B cell (primary cell): ENCODE measurements at regions of chr3 and their contacts with region 1.

Region 1: DNA sequence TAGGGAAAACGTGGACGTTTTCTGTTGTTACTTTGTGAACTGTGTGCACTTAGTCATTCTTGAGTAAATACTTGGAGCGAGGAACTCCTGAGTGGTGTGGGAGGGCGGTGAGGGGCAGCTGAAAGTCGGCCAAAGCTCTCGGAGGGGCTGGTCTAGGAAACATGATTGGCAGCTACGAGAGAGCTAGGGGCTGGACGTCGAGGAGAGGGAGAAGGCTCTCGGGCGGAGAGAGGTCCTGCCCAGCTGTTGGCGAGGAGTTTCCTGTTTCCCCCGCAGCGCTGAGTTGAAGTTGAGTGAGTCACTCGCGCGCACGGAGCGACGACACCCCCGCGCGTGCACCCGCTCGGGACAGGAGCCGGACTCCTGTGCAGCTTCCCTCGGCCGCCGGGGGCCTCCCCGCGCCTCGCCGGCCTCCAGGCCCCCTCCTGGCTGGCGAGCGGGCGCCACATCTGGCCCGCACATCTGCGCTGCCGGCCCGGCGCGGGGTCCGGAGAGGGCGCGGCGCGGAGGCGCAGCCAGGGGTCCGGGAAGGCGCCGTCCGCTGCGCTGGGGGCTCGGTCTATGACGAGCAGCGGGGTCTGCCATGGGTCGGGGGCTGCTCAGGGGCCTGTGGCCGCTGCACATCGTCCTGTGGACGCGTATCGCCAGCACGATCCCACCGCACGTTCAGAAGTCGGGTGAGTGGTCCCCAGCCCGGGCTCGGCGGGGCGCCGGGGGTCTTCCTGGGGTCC is at the start of gene TGFBR2:
- DNase-seq: peak; percentile 91
- ATAC-seq: peak; percentile 73
- H3K4me3 ChIP-seq: peak within 1 kb of the TSS; percentile 90 to 99 (median 96)
- H3K4me3 Mint-ChIP-seq: peak within 1 kb of the TSS; percentile 97
- H3K27ac ChIP-seq: peak within 1 kb of the TSS; percentile 94 to 95
- H3K27ac Mint-ChIP-seq: peak within 1 kb of the TSS; percentile 97
- H3K4me1 ChIP-seq: peaks cover 65 to 76% of the 10 kb centered on the region in 2 donors
- H3K4me1 Mint-ChIP-seq: peaks cover 73% of the 10 kb centered on the region
- H3K27me3 ChIP-seq: no peaks in the 10 kb centered on the region
- H3K27me3 Mint-ChIP-seq: no peaks in the 10 kb centered on the region
- CTCF ChIP-seq: no peak
- total RNA-seq, gene TGFBR2: 189 and 199 TPM in 2 replicates

Region 2: GRCh38 chr3:30269751-30270445 is 336.6 kb before region 1 on chr3:
- CTCF ChIA-PET with region 1: no interaction called
- POLR2A ChIA-PET with region 1: no interaction called
- intact Hi-C with region 1: loop called (anchors 5 kb)
- DNase-seq: peak; percentile 77
- ATAC-seq: peak; percentile 96
- H3K4me3 ChIP-seq: peak overlapping the region in 1 of 5 experiments; percentile 30
- H3K4me3 Mint-ChIP-seq: peak overlapping the region; percentile 57
- H3K27ac ChIP-seq: peak overlapping the region; percentile 8 to 25
- H3K27ac Mint-ChIP-seq: peak overlapping the region; percentile 0
- H3K4me1 ChIP-seq: peaks cover 10 to 12% of the 10 kb centered on the region in 2 donors
- H3K4me1 Mint-ChIP-seq: peaks cover 10% of the 10 kb centered on the region
- H3K27me3 ChIP-seq: no peaks in the 10 kb centered on the region
- H3K27me3 Mint-ChIP-seq: no peaks in the 10 kb centered on the region
- CTCF ChIP-seq: no peak

Region 3: DNA sequence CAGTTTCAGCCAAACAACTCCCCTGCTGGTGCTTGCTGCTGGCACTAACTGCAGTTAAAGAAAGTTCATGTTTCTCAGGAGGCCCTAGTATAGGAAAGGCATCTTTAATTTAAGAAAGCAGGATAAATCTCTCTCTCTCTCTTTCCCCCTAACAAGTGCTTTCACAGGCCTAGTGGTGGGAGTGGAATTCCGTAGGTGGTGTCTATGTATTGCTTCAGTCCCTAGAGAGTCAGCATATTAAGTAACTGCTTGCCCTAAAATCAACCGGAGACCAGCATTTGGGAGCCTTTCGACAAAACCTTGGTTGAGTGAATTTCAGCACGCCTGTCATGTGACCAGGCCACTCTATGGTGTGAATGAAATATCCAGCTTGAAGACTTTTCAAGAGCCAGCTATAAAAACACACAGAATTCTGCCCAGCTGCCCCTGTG is 169.3 kb before region 1 on chr3:
- CTCF ChIA-PET with region 1: no interaction called
- POLR2A ChIA-PET with region 1: no interaction called
- intact Hi-C with region 1: loop called (anchors 5 kb)
- DNase-seq: no peak
- ATAC-seq: no peak
- H3K4me3 ChIP-seq: no peak overlapping the region
- H3K4me3 Mint-ChIP-seq: no peak overlapping the region
- H3K27ac ChIP-seq: no peak overlapping the region
- H3K27ac Mint-ChIP-seq: no peak overlapping the region
- H3K4me1 ChIP-seq: peaks cover 28 to 42% of the 10 kb centered on the region in 2 donors
- H3K4me1 Mint-ChIP-seq: peaks cover 37% of the 10 kb centered on the region
- H3K27me3 ChIP-seq: no peaks in the 10 kb centered on the region
- H3K27me3 Mint-ChIP-seq: no peaks in the 10 kb centered on the region
- CTCF ChIP-seq: no peak

Region 4: DNA sequence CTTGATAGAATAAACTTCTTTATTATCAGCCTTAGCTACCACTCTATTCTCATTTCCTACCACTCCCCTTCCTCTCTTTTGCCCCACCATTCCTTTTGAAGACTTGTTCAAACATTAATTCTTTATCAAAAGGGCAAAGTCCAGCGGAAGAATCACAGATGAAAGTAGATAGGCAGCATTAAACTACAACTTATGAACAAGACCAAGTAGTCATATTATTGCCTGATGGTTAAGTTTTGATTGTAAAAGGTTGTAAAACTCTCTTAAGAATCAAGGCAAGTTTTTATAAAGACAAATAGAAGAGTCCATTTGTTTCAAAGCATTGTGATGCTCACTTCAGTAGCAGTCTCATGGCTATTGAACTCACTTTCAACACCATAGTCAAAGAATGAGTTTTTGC is 22.5 kb before region 1 on chr3:
- CTCF ChIA-PET with region 1: no interaction called
- POLR2A ChIA-PET with region 1: no interaction called
- intact Hi-C with region 1: no loop called
- DNase-seq: no peak
- ATAC-seq: no peak
- H3K4me3 ChIP-seq: no peak overlapping the region
- H3K4me3 Mint-ChIP-seq: no peak overlapping the region
- H3K27ac ChIP-seq: no peak overlapping the region
- H3K27ac Mint-ChIP-seq: no peak overlapping the region
- H3K4me1 ChIP-seq: no peaks in the 10 kb centered on the region
- H3K4me1 Mint-ChIP-seq: peaks cover 3% of the 10 kb centered on the region
- H3K27me3 ChIP-seq: no peaks in the 10 kb centered on the region
- H3K27me3 Mint-ChIP-seq: no peaks in the 10 kb centered on the region
- CTCF ChIP-seq: no peak

Region 5: GRCh38 chr3:30623351-30623750 is 16.9 kb after region 1 on chr3:
- CTCF ChIA-PET with region 1: interaction called, 14 read pairs
- POLR2A ChIA-PET with region 1: interaction called, 4 read pairs
- intact Hi-C with region 1: loop called (anchors 1 kb)
- DNase-seq: no peak
- ATAC-seq: no peak
- H3K4me3 ChIP-seq: peak overlapping the region in 1 of 5 experiments; percentile 29
- H3K4me3 Mint-ChIP-seq: peak overlapping the region; percentile 65
- H3K27ac ChIP-seq: peak overlapping the region; percentile 42 to 89
- H3K27ac Mint-ChIP-seq: peak overlapping the region; percentile 93
- H3K4me1 ChIP-seq: peaks cover 94 to 100% of the 10 kb centered on the region in 2 donors
- H3K4me1 Mint-ChIP-seq: peaks cover 94% of the 10 kb centered on the region
- H3K27me3 ChIP-seq: no peaks in the 10 kb centered on the region
- H3K27me3 Mint-ChIP-seq: no peaks in the 10 kb centered on the region
- CTCF ChIP-seq: no peak

Region 6: DNA sequence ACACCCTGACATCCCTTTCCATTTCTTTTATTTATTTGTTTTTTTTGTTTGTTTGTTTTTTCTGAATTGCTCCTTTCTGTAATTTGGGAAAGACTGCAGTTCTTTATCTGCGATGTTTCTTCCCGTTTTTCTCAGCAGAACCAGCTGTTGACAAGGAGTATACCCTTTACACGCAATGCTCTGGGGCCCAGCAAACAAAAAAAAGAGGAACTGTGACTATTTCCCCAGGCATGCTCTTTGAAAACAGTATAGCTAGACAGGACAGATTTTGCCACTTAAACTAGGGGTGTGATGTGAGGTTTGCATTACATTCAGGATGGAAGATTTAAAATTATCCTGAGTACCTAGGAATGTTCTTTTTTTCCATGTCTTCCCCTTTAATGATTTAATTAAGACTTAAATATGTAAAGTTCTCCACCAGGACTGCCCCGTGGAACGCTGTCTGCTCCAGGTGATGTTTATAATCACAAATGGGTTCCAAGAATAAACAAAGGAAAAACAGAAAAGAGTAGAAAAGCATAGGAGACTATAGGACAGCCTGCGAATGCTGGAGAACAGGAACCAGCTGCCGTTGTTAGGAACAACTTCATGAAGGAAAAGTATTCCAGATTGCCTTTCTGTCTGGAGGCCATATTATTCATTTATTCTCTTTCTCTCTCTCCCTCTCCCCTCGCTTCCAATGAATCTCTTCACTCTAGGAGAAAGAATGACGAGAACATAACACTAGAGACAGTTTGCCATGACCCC is 43.3 kb after region 1 on chr3:
- CTCF ChIA-PET with region 1: interaction called, 4 read pairs
- POLR2A ChIA-PET with region 1: interaction called, 11 read pairs
- intact Hi-C with region 1: loop called (anchors 5 kb)
- DNase-seq: peak; percentile 82
- ATAC-seq: peak; percentile 71
- H3K4me3 ChIP-seq: peak overlapping the region in 1 of 5 experiments; percentile 30
- H3K4me3 Mint-ChIP-seq: peak overlapping the region; percentile 72
- H3K27ac ChIP-seq: peak overlapping the region; percentile 64 to 73
- H3K27ac Mint-ChIP-seq: peak overlapping the region; percentile 92
- H3K4me1 ChIP-seq: peaks cover 78 to 86% of the 10 kb centered on the region in 2 donors
- H3K4me1 Mint-ChIP-seq: peaks cover 88% of the 10 kb centered on the region
- H3K27me3 ChIP-seq: no peaks in the 10 kb centered on the region
- H3K27me3 Mint-ChIP-seq: no peaks in the 10 kb centered on the region
- CTCF ChIP-seq: no peak

Region 7: DNA sequence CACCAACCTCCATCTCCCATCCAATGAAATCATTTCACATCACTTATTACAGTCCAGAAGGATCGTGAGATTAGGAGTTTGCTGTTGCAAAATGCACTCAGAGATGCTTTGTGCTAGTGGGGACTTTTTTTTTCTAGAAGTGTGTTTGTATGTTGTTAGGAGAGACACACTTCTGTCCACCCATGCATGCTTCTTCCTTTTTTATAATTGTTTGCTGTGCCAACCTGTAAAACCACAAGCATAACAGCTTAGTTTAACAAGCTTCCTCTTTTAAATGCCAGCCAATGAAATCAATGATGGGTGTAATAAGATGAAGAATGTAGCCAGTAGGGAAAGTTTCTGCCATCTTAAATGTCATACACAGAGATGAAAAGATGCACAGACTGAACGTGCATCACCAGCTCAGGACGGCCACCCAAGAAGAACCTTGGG is 620.7 kb after region 1 on chr3:
- CTCF ChIA-PET with region 1: no interaction called
- POLR2A ChIA-PET with region 1: no interaction called
- intact Hi-C with region 1: loop called (anchors 10 kb)
- DNase-seq: peak; percentile 90
- ATAC-seq: peak; percentile 83
- H3K4me3 ChIP-seq: peak overlapping the region in 2 of 5 experiments; percentile 6 to 8
- H3K4me3 Mint-ChIP-seq: peak overlapping the region; percentile 80
- H3K27ac ChIP-seq: peak overlapping the region; percentile 86 to 91
- H3K27ac Mint-ChIP-seq: peak overlapping the region; percentile 99
- H3K4me1 ChIP-seq: peaks cover 77 to 84% of the 10 kb centered on the region in 2 donors
- H3K4me1 Mint-ChIP-seq: peaks cover 76% of the 10 kb centered on the region
- H3K27me3 ChIP-seq: no peaks in the 10 kb centered on the region
- H3K27me3 Mint-ChIP-seq: no peaks in the 10 kb centered on the region
- CTCF ChIP-seq: no peak